MCF 10A (cell line): ENCODE measurements at regions of chr1 and their contacts with region 1.

Region 1: DNA sequence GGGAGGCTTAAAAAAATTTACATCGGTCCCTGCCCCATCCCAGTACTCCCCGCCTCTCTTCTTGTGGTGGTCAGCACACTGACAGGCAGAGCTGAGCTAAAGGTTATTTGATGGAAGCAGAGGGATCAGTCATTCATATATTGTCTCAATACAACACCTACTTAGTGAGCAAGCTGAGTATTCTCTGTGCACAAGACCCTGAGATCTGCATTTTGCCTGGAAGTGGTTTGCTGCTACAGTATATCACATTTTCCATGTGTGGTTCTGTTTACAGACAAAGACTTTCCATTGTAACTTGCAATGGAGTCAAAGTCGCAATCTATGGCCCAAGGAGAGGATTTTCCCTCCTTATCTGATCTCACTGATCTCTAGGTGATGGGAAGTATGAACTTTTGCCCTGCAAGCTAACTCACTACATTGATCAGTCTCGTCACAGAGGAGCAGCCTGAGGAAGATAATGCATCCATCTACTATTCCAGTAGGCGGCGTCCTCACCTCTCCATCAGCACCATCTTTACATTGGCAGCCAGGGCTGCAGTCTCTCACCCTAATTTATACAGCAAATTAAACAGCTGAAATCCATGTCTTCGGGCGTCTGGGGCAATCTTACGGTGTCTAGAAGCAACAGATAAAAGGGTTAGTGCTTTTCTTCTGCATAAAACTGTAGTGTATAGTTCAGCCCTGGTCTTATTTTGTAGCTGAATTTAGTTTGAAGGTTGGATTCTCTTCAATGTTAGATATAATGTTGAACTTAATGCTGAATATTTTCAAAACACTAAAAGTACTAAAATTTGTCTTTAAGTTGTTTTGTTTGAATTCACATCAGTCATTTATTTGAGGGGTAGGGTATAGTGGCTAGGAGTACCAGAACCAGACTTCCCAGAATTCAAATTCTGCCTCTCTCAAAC is 3.2 kb upstream of the TRAF5 start:
- DNase-seq: peak; percentile 88
- H3K4me3 Mint-ChIP-seq: no peak overlapping the region
- H3K27ac Mint-ChIP-seq: no peak overlapping the region
- H3K4me1 Mint-ChIP-seq: peaks cover 15% of the 10 kb centered on the region
- H3K27me3 Mint-ChIP-seq: no peaks in the 10 kb centered on the region
- CTCF ChIP-seq: peak; percentile 98

Region 2: DNA sequence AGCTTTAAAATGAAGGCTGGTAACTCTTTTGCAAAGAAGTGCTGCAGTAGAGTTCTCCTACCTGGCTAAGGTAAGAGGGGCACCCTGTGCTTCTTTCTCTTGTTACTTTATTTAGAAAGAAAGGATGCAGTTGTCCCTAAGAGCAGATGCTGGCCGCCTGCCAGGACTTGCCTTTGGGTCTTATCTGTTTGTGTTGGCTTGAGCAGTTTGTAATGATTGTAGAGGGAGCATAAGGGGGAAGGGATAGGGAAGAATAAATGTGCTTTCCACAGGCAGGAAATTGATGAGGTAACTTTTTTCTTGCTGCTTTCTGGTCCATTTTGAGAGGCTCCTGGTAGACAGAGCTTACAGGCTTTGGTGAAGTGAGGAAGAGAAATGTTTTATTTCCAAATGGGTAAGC is 765.1 kb before region 1 on chr1:
- CTCF ChIA-PET with region 1: no interaction called
- POLR2A ChIA-PET with region 1: no interaction called
- intact Hi-C with region 1: no loop called
- DNase-seq: peak; percentile 39
- H3K4me3 Mint-ChIP-seq: no peak overlapping the region
- H3K27ac Mint-ChIP-seq: no peak overlapping the region
- H3K4me1 Mint-ChIP-seq: no peaks in the 10 kb centered on the region
- H3K27me3 Mint-ChIP-seq: peaks cover 17% of the 10 kb centered on the region
- CTCF ChIP-seq: no peak

Region 3: DNA sequence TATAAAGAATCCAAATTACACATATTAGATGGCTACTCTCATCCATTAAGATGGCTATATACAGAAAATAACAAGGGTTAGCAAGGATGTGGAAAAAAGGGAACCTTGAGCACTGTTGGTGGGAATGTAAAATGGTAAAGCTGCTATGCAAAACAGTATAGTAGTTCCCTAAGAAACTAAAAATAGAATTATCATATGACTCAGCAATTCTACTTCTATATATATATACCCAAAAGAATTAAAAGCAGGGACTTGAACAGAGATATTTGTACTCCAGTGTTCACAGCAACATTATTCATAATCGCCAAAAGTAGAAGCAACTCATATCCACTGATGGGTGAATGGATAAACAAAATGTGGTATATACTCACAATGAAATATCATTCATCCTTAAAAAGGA is 315.6 kb before region 1 on chr1:
- CTCF ChIA-PET with region 1: no interaction called
- POLR2A ChIA-PET with region 1: no interaction called
- intact Hi-C with region 1: no loop called
- DNase-seq: no peak
- H3K4me3 Mint-ChIP-seq: no peak overlapping the region
- H3K27ac Mint-ChIP-seq: no peak overlapping the region
- H3K4me1 Mint-ChIP-seq: no peaks in the 10 kb centered on the region
- H3K27me3 Mint-ChIP-seq: no peaks in the 10 kb centered on the region
- CTCF ChIP-seq: no peak

Region 4: GRCh38 chr1:211183747-211184313 is 139.6 kb before region 1 on chr1:
- CTCF ChIA-PET with region 1: no interaction called
- POLR2A ChIA-PET with region 1: no interaction called
- intact Hi-C with region 1: no loop called
- DNase-seq: no peak
- H3K4me3 Mint-ChIP-seq: no peak overlapping the region
- H3K27ac Mint-ChIP-seq: no peak overlapping the region
- H3K4me1 Mint-ChIP-seq: no peaks in the 10 kb centered on the region
- H3K27me3 Mint-ChIP-seq: no peaks in the 10 kb centered on the region
- CTCF ChIP-seq: no peak

Region 5: DNA sequence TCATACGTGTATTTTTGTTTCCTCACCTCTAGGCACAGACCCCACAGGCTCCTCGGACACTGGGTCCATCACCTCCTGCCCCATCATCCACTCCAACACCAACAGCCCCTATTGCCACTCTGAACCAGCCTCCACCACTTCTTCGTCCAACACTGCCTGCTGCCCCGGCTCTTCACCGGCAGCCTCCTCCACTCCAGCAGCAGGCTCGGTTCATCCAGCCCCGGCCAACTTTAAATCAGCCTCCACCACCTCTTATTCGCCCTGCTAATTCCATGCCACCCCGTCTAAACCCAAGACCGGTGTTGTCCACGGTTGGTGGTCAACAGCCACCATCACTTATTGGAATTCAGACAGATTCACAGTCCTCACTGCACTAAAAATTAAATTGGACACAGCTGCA is 10.0 kb before region 1 on chr1:
- CTCF ChIA-PET with region 1: interaction called, 20 read pairs
- POLR2A ChIA-PET with region 1: interaction called, 3 read pairs
- intact Hi-C with region 1: no loop called
- DNase-seq: no peak
- H3K4me3 Mint-ChIP-seq: no peak overlapping the region
- H3K27ac Mint-ChIP-seq: no peak overlapping the region
- H3K4me1 Mint-ChIP-seq: no peaks in the 10 kb centered on the region
- H3K27me3 Mint-ChIP-seq: no peaks in the 10 kb centered on the region
- CTCF ChIP-seq: no peak

Region 6: DNA sequence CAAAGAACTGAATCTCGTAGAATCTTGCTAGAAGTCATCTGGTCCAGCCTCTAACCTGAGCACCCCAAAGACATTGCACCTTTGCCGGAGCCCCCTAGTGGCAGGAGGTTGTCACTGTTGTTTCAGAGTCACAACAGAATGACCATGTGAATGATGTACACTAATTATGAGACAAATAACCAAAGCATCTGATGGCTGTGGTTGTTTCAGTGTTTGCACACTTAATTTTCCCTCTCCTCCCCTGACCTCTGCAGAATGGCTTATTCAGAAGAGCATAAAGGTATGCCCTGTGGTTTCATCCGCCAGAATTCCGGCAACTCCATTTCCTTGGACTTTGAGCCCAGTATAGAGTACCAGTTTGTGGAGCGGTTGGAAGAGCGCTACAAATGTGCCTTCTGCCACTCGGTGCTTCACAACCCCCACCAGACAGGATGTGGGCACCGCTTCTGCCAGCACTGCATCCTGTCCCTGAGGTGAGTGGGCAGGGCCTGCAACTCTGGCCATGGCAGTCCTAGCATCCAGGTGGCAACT is 29.6 kb after region 1 on chr1:
- CTCF ChIA-PET with region 1: interaction called, 65 read pairs
- POLR2A ChIA-PET with region 1: interaction called, 6 read pairs
- intact Hi-C with region 1: loop called (anchors 2 kb)
- DNase-seq: peak; percentile 78
- H3K4me3 Mint-ChIP-seq: no peak overlapping the region
- H3K27ac Mint-ChIP-seq: no peak overlapping the region
- H3K4me1 Mint-ChIP-seq: peaks cover 15% of the 10 kb centered on the region
- H3K27me3 Mint-ChIP-seq: no peaks in the 10 kb centered on the region
- CTCF ChIP-seq: peak; percentile 93

Region 7: GRCh38 chr1:211382714-211383480 is 59.5 kb after region 1 on chr1:
- CTCF ChIA-PET with region 1: interaction called, 27 read pairs
- POLR2A ChIA-PET with region 1: interaction called, 18 read pairs
- intact Hi-C with region 1: loop called (anchors 1 kb)
- DNase-seq: peak; percentile 99
- H3K4me3 Mint-ChIP-seq: peak overlapping the region; percentile 82
- H3K27ac Mint-ChIP-seq: peak overlapping the region; percentile 98
- H3K4me1 Mint-ChIP-seq: peaks cover 26% of the 10 kb centered on the region
- H3K27me3 Mint-ChIP-seq: no peaks in the 10 kb centered on the region
- CTCF ChIP-seq: no peak

Region 8: GRCh38 chr1:211484755-211485479 is 161.5 kb after region 1 on chr1:
- CTCF ChIA-PET with region 1: interaction called, 167 read pairs
- POLR2A ChIA-PET with region 1: no interaction called
- intact Hi-C with region 1: no loop called
- DNase-seq: no peak
- H3K4me3 Mint-ChIP-seq: no peak overlapping the region
- H3K27ac Mint-ChIP-seq: no peak overlapping the region
- H3K4me1 Mint-ChIP-seq: no peaks in the 10 kb centered on the region
- H3K27me3 Mint-ChIP-seq: no peaks in the 10 kb centered on the region
- CTCF ChIP-seq: no peak

Region 9: GRCh38 chr1:211578640-211579433 is 255.4 kb after region 1 on chr1 and contains the start of gene SLC30A1:
- CTCF ChIA-PET with region 1: interaction called, 4 read pairs
- POLR2A ChIA-PET with region 1: interaction called, 3 read pairs
- intact Hi-C with region 1: loop called (anchors 1 kb)
- DNase-seq: peak; percentile 100
- H3K4me3 Mint-ChIP-seq: peak within 1 kb of the TSS; percentile 89
- H3K27ac Mint-ChIP-seq: peak within 1 kb of the TSS; percentile 96
- H3K4me1 Mint-ChIP-seq: peaks cover 48% of the 10 kb centered on the region
- H3K27me3 Mint-ChIP-seq: no peaks in the 10 kb centered on the region
- CTCF ChIP-seq: no peak
- total RNA-seq, gene SLC30A1: 87.0 and 94.1 TPM in 2 replicates